ENCODE measurements at regions of chr11 and their contacts with region 1.

Region 1: DNA sequence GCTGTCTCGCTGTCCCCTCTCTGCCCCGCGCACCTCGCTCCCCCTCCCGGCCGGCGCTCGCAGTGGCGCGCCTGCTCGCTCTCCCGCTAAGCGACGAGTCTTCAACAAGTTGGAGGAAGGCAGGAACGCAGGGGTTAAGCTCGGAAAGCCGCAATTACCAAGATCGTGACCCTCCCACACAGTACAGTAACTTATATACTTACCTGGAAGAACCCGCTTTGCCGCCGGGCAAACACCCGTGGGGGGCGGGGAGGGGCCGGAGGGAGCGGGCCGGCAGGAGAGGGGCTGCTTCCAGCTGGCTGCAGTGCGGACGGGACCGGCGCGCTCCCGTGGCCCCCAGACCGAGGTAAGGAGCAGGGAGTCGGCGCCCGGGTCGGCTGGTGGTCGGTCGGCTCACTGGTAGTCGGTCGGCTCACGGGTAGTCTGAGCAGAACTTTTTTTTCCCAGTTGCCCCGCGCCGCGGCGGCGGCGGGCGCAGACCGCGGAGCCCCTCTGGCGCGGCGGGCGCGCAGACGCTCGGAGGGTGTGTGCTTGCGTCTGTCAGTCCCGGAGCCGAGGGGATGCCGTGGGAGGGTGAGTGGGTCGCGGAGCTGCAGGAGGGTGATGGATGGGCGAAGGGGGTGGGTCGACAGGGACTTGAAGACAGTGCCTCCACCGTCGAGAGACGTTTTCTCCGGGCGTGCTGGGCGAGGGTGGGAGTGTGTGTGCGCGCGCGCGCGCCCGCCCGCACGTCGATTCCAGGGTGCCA is 101.2 kb upstream of the HSD17B12 start:
- ATAC-seq: peak; percentile 0 to 56 (median 11)
- H3K4me3 ChIP-seq: peak overlapping the region; percentile 40 to 62 (median 49)
- H3K27ac ChIP-seq: no peak overlapping the region
- H3K4me1 ChIP-seq: peaks cover 26 to 43% of the 10 kb centered on the region in 2 donors

Region 2: GRCh38 chr11:43010042-43010441 is 569.3 kb before region 1 on chr11:
- in situ Hi-C with region 1: no loop called
- ATAC-seq: no peak
- H3K4me3 ChIP-seq: no peak overlapping the region
- H3K27ac ChIP-seq: no peak overlapping the region
- H3K4me1 ChIP-seq: no peaks in the 10 kb centered on the region

Region 3: GRCh38 chr11:43802509-43802908 is 223.2 kb after region 1 on chr11:
- in situ Hi-C with region 1: loop called in 2 of 9 experiments (anchors 25 kb)
- ATAC-seq: no peak
- H3K4me3 ChIP-seq: no peak overlapping the region
- H3K27ac ChIP-seq: no peak overlapping the region
- H3K4me1 ChIP-seq: no peaks in the 10 kb centered on the region

Measured in motor neuron (in vitro differentiated cells).